ENCODE measurements at regions of chr5 and their contacts with region 1.

Region 1: DNA sequence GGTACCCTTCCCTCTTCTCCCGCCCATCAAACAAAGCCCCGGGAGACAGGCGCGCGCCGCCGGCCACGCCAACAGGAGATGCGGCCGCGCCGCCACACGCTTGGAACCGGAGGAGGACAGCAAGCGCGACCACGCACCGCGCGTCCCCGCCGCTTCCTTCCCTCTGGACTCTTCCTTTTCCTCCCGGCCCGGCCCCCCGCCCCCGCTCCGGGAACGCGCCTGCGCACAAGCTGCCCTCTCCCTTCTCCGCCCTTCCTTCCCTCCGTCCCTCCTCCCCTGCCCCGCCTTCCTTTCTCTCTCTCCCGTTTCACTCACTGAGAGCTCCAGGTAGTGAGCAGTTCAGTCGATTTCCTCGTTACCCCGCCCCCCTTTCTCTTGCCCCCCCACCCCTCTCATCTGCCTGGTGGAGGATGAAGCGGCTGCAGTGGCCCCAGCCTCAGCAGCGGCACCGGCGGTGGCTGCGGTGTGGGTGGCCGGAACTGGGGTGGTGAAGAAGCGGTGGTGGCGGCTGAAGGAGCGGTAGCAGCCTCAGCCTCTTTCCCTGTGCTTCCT is at the start of gene RASA1:
- DNase-seq: peak; percentile 99
- total RNA-seq, gene RASA1: 19.2 TPM

Region 2: GRCh38 chr5:86617756-86618576 is 649.7 kb before region 1 on chr5 and contains the start of gene COX7C:
- intact Hi-C with region 1: loop called (anchors 5 kb)
- DNase-seq: peak; percentile 94
- total RNA-seq, gene COX7C: 1,422 TPM

Region 3: GRCh38 chr5:87300744-87301143 is 33.1 kb after region 1 on chr5:
- intact Hi-C with region 1: no loop called
- DNase-seq: no peak

Region 4: GRCh38 chr5:87412630-87413342 is 145.1 kb after region 1 on chr5 and contains the start of gene CCNH:
- intact Hi-C with region 1: loop called (anchors 1 kb)
- DNase-seq: peak; percentile 99
- total RNA-seq, gene CCNH: 28.6 TPM